ENCODE measurements at regions of chr3 and their contacts with region 1.

Region 1: DNA sequence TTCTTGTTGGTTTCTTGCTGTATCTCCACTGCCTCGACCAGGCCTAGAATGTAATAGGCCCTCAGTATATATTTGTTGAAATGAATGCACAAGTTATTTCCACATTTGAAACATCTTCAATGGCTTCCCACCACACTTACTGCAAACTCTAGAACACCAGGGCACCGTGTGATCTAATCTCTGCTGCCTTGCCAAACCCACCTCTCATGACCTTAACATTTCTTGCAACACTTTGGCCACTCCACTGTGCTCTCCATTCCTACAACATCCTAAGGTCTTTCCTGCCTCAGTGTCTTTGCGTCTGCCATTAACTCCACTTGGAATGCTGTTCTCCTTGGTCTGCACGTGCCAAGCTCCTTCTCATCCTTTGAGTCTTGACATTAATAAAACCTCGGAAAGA is 14.1 kb downstream of the FRMD4B start:
- DNase-seq: no peak
- ATAC-seq: no peak
- H3K4me3 ChIP-seq: no peak overlapping the region
- H3K27ac ChIP-seq: no peak overlapping the region
- H3K4me1 ChIP-seq: no peaks in the 10 kb centered on the region
- H3K27me3 ChIP-seq: no peaks in the 10 kb centered on the region; the same call in 1 of the 2 replicates
- CTCF ChIP-seq: no peak
- POLR2A ChIP-seq: no peak
- RAD21 ChIP-seq: no peak

Region 2: GRCh38 chr3:69294014-69294775 is 77.6 kb before region 1 on chr3:
- CTCF ChIA-PET with region 1: no interaction called
- POLR2A ChIA-PET with region 1: no interaction called
- dilution Hi-C with region 1: no loop called
- in situ Hi-C with region 1: no loop called
- intact Hi-C with region 1: no loop called
- DNase-seq: no peak
- ATAC-seq: no peak
- H3K4me3 ChIP-seq: no peak overlapping the region
- H3K27ac ChIP-seq: no peak overlapping the region
- H3K4me1 ChIP-seq: no peaks in the 10 kb centered on the region
- H3K27me3 ChIP-seq: peaks cover 7% of the 10 kb centered on the region
- CTCF ChIP-seq: no peak
- POLR2A ChIP-seq: no peak
- RAD21 ChIP-seq: no peak

Region 3: GRCh38 chr3:69410250-69410649 is 38.4 kb after region 1 on chr3:
- CTCF ChIA-PET with region 1: no interaction called
- POLR2A ChIA-PET with region 1: no interaction called
- dilution Hi-C with region 1: no loop called
- in situ Hi-C with region 1: no loop called
- intact Hi-C with region 1: no loop called
- DNase-seq: peak; percentile 53
- ATAC-seq: peak; percentile 93
- H3K4me3 ChIP-seq: no peak overlapping the region
- H3K27ac ChIP-seq: no peak overlapping the region
- H3K4me1 ChIP-seq: no peaks in the 10 kb centered on the region
- H3K27me3 ChIP-seq: peaks cover 1% of the 10 kb centered on the region
- CTCF ChIP-seq: peak; percentile 67
- POLR2A ChIP-seq: no peak
- RAD21 ChIP-seq: peak; percentile 40

Region 4: GRCh38 chr3:69844706-69845105 is 472.9 kb after region 1 on chr3:
- CTCF ChIA-PET with region 1: no interaction called
- POLR2A ChIA-PET with region 1: interaction called, 11 read pairs
- dilution Hi-C with region 1: no loop called
- in situ Hi-C with region 1: no loop called
- intact Hi-C with region 1: no loop called
- DNase-seq: no peak
- ATAC-seq: no peak
- H3K4me3 ChIP-seq: no peak overlapping the region
- H3K27ac ChIP-seq: no peak overlapping the region
- H3K4me1 ChIP-seq: peaks cover 6% of the 10 kb centered on the region
- H3K27me3 ChIP-seq: no peaks in the 10 kb centered on the region
- CTCF ChIP-seq: no peak
- POLR2A ChIP-seq: no peak
- RAD21 ChIP-seq: no peak